Calu3 (cell line): ENCODE measurements at regions of chr16 and their contacts with region 1.

Region 1: GRCh38 chr16:10812312-10813098 is 6.1 kb downstream of the TVP23A start:
- DNase-seq: no peak
- H3K4me3 Mint-ChIP-seq: no peak overlapping the region
- H3K27ac Mint-ChIP-seq: no peak overlapping the region
- H3K4me1 Mint-ChIP-seq: no peaks in the 10 kb centered on the region
- H3K27me3 Mint-ChIP-seq: no peaks in the 10 kb centered on the region
- CTCF ChIP-seq: no peak

Region 2: GRCh38 chr16:10862432-10862831 is 49.9 kb after region 1 on chr16:
- CTCF ChIA-PET with region 1: interaction called, 13 read pairs
- intact Hi-C with region 1: no loop called
- DNase-seq: peak; percentile 82
- H3K4me3 Mint-ChIP-seq: no peak overlapping the region
- H3K27ac Mint-ChIP-seq: peak overlapping the region; percentile 27
- H3K4me1 Mint-ChIP-seq: peaks cover 22% of the 10 kb centered on the region
- H3K27me3 Mint-ChIP-seq: no peaks in the 10 kb centered on the region
- CTCF ChIP-seq: no peak

Region 3: GRCh38 chr16:10949370-10949970 is 137.0 kb after region 1 on chr16:
- CTCF ChIA-PET with region 1: no interaction called
- intact Hi-C with region 1: no loop called
- DNase-seq: no peak
- H3K4me3 Mint-ChIP-seq: no peak overlapping the region
- H3K27ac Mint-ChIP-seq: no peak overlapping the region
- H3K4me1 Mint-ChIP-seq: peaks cover 50% of the 10 kb centered on the region
- H3K27me3 Mint-ChIP-seq: no peaks in the 10 kb centered on the region
- CTCF ChIP-seq: no peak